Astrocyte of the cerebellum (primary cell): ENCODE measurements at regions of chr9 and their contacts with region 1.

Region 1: GRCh38 chr9:17793713-17794622 is 215.1 kb downstream of the SH3GL2 start:
- DNase-seq: no peak
- H3K4me3 ChIP-seq: no peak overlapping the region
- CTCF ChIP-seq: no peak

Region 2: DNA sequence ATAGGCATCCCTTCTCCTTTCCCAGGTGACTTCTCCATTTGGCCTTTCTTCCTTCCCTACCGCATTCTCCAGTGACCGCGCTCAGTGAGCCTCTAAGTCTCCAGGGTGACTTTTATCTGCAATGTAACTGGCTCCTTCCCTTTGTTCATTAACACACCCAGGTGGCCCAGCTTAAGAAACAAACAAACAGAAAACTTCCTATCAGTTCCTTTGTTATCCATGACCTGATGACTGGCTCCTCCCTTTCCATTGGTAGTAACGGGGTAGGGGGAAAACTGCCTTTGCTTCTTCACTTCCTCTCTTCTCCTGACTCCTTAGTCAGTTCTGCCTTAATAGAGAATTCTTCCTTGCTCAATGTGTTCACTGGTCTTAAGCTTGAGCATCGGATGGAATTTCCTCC is 222.1 kb before region 1 on chr9:
- in situ Hi-C with region 1: loop called (anchors 25 kb)
- DNase-seq: no peak
- H3K4me3 ChIP-seq: no peak overlapping the region
- CTCF ChIP-seq: no peak

Region 3: GRCh38 chr9:17725399-17726010 is 68.5 kb before region 1 on chr9:
- in situ Hi-C with region 1: no loop called
- DNase-seq: no peak
- H3K4me3 ChIP-seq: no peak overlapping the region
- CTCF ChIP-seq: no peak